Activated CD4-positive, alpha-beta T cell treated with anti-CD3 and anti-CD28 coated beads for 36 hours (primary cell): ENCODE measurements at regions of chr7 and their contacts with region 1.

Region 1: DNA sequence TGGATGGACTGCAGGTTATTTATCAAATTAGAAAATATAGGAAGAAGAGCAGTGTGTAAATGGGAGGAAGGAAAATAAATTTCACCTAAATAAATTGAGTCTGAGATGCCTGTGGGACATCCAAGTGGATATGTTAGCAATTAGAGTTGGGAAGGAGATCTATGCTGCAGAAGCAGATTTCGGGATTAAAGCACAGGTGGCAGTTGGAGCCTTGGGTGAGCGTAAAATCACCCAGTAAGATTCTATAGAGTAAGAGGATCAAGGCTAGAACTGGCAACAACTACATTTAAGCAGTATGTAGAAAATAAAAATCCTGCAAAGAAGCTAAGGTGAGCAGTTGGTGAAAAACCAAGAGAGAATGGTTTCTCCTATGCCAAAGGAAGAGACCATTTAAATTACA is 8.4 kb downstream of the TRIM4 start:
- DNase-seq: no peak
- ATAC-seq: no peak
- H3K4me3 Mint-ChIP-seq: no peak overlapping the region
- H3K27ac Mint-ChIP-seq: peak overlapping the region; percentile 43
- H3K4me1 Mint-ChIP-seq: peaks cover 30% of the 10 kb centered on the region
- H3K27me3 Mint-ChIP-seq: no peaks in the 10 kb centered on the region

Region 2: GRCh38 chr7:99090771-99091542 is 820.0 kb before region 1 on chr7:
- CTCF ChIA-PET with region 1: no interaction called
- POLR2A ChIA-PET with region 1: no interaction called
- intact Hi-C with region 1: no loop called
- DNase-seq: no peak
- ATAC-seq: no peak
- H3K4me3 Mint-ChIP-seq: no peak overlapping the region
- H3K27ac Mint-ChIP-seq: no peak overlapping the region
- H3K4me1 Mint-ChIP-seq: peaks cover 6% of the 10 kb centered on the region
- H3K27me3 Mint-ChIP-seq: no peaks in the 10 kb centered on the region

Region 3: GRCh38 chr7:99949638-99950228 is 38.8 kb after region 1 on chr7:
- CTCF ChIA-PET with region 1: interaction called, 44 read pairs
- POLR2A ChIA-PET with region 1: no interaction called
- intact Hi-C with region 1: loop called in 1 of 2 experiments (anchors 1 kb)
- DNase-seq: no peak
- ATAC-seq: no peak
- H3K4me3 Mint-ChIP-seq: no peak overlapping the region
- H3K27ac Mint-ChIP-seq: no peak overlapping the region
- H3K4me1 Mint-ChIP-seq: peaks cover 9% of the 10 kb centered on the region
- H3K27me3 Mint-ChIP-seq: peaks cover 6% of the 10 kb centered on the region

Region 4: GRCh38 chr7:99975782-99976521 is 65.0 kb after region 1 on chr7 and contains the start of gene AZGP1:
- CTCF ChIA-PET with region 1: interaction called, 33 read pairs
- POLR2A ChIA-PET with region 1: no interaction called
- intact Hi-C with region 1: no loop called
- DNase-seq: no peak
- ATAC-seq: no peak
- H3K4me3 Mint-ChIP-seq: no peak within 1 kb of the TSS
- H3K27ac Mint-ChIP-seq: no peak within 1 kb of the TSS
- H3K4me1 Mint-ChIP-seq: peaks cover 12% of the 10 kb centered on the region
- H3K27me3 Mint-ChIP-seq: peaks cover 4% of the 10 kb centered on the region
- total RNA-seq, gene AZGP1: not detected